Thyroid gland (tissue), 4 donors: ENCODE measurements at regions of chr16 and their contacts with region 1.

Region 1: DNA sequence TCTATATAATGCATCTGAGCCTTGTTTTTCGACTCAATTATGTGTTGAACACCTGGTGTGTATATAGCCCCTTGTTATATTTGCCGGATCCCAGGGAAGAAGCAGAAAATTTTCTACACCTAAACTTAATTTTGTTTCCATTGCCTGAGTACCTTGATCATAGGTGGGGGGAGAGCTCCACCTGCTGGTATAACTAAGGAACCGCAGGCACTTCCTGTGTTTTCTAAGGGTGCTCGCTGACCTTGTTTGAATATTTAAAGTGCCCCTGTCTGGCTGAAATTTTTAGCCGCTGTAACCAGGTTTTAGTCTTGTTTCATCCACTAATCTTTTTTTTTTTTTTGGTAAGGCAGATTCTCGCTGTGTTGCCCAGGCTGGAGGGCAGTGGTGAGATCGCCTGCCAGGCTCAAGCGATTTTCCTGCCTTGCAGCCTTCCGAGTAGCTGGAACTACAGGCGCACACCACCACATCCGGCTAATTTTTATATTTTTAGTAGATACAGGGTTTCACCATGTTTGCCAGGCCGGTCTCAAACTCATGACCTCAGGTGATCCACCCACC is 6.5 kb upstream of the NUBP1 start:
- DNase-seq: peak; percentile 45 to 60
- H3K4me3 ChIP-seq: no peak overlapping the region
- H3K27ac ChIP-seq: peak overlapping the region; percentile 40 to 63 (median 56)
- H3K4me1 ChIP-seq: peaks cover 0 to 13% of the 10 kb centered on the region in 2 donors
- H3K27me3 ChIP-seq: no peaks in the 10 kb centered on the region
- CTCF ChIP-seq: peak; percentile 83 to 96 (median 93)
- POLR2A ChIP-seq: no peak

Region 2: DNA sequence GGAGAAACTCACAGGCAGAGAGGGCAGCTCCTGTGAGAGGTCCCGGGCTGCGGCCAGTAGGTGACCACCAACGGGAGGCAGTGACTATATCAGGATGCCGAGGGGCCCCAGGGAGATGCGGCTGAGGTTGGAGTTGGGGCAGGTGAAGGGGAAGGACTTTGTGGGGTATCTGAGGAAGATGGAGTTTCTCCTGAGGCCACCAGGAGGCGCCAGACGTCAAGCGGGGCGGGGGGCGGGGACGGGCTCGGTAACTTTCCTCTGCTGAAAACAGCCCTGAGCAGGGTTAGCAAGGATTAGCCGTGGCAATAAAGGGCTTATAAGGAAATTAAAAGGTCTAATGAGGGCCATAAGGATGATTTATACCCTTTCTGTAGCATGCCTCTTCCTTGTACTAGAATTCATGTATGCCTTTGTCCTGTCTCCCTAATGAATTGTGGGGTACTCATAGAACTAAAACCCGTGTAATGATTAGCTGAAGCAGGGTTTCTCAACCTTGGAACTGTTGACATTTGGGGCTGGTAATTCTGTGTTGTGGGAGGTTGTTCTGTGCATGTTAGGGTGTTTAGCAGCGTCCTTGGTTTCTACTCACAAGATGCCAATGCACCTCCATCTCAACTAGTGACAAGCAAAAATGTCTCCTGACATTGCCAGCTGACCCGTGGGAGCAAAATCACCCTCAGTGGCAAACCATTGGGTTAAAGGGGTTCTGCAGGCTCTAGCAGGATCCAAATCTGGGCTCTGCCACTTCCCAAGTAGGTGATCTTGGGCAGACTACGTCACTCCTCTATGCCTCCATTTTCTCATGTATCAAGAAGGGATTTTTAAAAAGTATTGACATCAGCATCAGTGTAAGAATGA is 480.1 kb before region 1 on chr16:
- intact Hi-C with region 1: loop called (anchors 5 kb)
- DNase-seq: peak; percentile 27 to 52
- H3K4me3 ChIP-seq: no peak overlapping the region
- H3K27ac ChIP-seq: peak overlapping the region in 1 of 3 donors; percentile 36
- H3K4me1 ChIP-seq: peaks cover 11 to 27% of the 10 kb centered on the region in 2 donors
- H3K27me3 ChIP-seq: no peaks in the 10 kb centered on the region
- CTCF ChIP-seq: peak; percentile 54 to 94 (median 73)
- POLR2A ChIP-seq: no peak

Region 3: GRCh38 chr16:10517868-10518267 is 219.3 kb before region 1 on chr16:
- intact Hi-C with region 1: loop called (anchors 2 kb)
- DNase-seq: no peak
- H3K4me3 ChIP-seq: no peak overlapping the region
- H3K27ac ChIP-seq: no peak overlapping the region
- H3K4me1 ChIP-seq: peaks cover 0 to 12% of the 10 kb centered on the region in 2 donors
- H3K27me3 ChIP-seq: no peaks in the 10 kb centered on the region
- CTCF ChIP-seq: no peak
- POLR2A ChIP-seq: no peak

Region 4: DNA sequence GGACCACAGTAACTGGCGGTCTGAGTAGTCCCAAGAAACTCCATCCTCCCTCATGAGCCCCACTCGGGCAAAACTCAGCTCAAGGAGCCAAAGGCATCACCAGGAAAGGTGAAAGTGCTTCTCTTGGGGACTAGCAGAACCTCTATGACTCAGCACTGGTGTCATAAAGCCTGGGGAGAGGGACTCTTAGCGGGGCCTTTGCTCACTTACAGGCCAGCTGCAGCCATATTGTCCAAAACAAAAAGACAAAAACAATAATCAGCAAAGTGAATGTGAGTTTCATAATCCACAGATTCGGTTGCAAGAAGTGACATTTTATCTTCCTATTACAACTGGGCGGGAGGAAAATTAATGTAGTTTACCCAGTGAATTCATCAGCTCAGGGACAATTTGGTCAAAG is 42.3 kb before region 1 on chr16 and contains the start of gene TEKT5:
- intact Hi-C with region 1: no loop called
- DNase-seq: no peak
- H3K4me3 ChIP-seq: no peak within 1 kb of the TSS
- H3K27ac ChIP-seq: no peak within 1 kb of the TSS
- H3K4me1 ChIP-seq: no peaks in the 10 kb centered on the region
- H3K27me3 ChIP-seq: no peaks in the 10 kb centered on the region
- CTCF ChIP-seq: no peak
- POLR2A ChIP-seq: no peak
- total RNA-seq, gene TEKT5: 3.0 TPM in 1 of 4 donors, not detected in the others

Region 5: DNA sequence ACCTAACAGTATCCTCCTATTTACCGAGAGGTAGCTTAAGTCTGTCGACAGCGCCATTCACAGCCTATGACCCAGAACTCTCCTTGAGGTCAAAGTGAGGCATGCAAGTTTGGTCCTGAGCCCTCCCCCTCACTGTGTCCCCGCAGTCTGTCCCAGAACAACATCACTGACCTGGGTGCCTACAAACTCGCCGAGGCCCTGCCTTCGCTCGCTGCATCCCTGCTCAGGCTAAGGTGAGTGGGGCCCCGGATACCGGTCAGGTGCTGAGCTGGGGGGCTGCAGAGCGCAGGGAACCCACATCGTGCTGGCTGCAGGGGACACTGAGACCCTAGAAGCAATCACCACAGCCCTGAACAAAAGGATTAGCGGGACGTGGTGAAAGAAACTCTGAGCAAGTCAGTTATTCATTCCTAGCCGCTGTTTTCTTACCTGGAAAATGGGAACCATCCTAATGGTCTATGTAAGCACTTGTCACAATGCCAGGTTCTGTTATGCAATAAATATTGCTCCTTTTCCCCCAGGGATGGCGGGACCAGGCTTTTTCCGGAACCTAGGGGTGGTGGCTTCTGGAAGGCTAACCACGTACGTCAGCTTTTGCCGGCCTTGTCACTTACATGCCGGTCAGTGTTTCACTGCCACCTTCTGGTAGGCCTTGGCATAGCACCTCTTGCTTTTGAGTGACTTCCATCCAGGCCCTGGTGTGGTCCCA is 181.3 kb after region 1 on chr16:
- intact Hi-C with region 1: loop called (anchors 5 kb)
- DNase-seq: peak; percentile 96
- H3K4me3 ChIP-seq: no peak overlapping the region
- H3K27ac ChIP-seq: peak overlapping the region in 1 of 3 donors; percentile 25
- H3K4me1 ChIP-seq: peaks cover 16 to 39% of the 10 kb centered on the region in 2 donors
- H3K27me3 ChIP-seq: no peaks in the 10 kb centered on the region
- CTCF ChIP-seq: peak; percentile 85 to 96 (median 94)
- POLR2A ChIP-seq: no peak